ENCODE measurements at regions of chr13 and their contacts with region 1.

Region 1: GRCh38 chr13:21476893-21477472 is 17.9 kb upstream of the ZDHHC20 start:
- DNase-seq: peak; percentile 93
- H3K4me3 ChIP-seq: peak overlapping the region; percentile 23
- H3K27ac ChIP-seq: peak overlapping the region; percentile 61
- H3K4me1 ChIP-seq: peaks cover 30% of the 10 kb centered on the region
- H3K27me3 ChIP-seq: no peaks in the 10 kb centered on the region
- CTCF ChIP-seq: peak; percentile 99

Region 2: GRCh38 chr13:20495082-20496023 is 981.6 kb before region 1 on chr13:
- CTCF ChIA-PET with region 1: interaction called, 3 read pairs
- POLR2A ChIA-PET with region 1: no interaction called
- intact Hi-C with region 1: loop called (anchors 1 kb)
- DNase-seq: peak; percentile 75
- H3K4me3 ChIP-seq: no peak overlapping the region
- H3K27ac ChIP-seq: no peak overlapping the region
- H3K4me1 ChIP-seq: peaks cover 8% of the 10 kb centered on the region
- H3K27me3 ChIP-seq: no peaks in the 10 kb centered on the region
- CTCF ChIP-seq: peak; percentile 96

Region 3: DNA sequence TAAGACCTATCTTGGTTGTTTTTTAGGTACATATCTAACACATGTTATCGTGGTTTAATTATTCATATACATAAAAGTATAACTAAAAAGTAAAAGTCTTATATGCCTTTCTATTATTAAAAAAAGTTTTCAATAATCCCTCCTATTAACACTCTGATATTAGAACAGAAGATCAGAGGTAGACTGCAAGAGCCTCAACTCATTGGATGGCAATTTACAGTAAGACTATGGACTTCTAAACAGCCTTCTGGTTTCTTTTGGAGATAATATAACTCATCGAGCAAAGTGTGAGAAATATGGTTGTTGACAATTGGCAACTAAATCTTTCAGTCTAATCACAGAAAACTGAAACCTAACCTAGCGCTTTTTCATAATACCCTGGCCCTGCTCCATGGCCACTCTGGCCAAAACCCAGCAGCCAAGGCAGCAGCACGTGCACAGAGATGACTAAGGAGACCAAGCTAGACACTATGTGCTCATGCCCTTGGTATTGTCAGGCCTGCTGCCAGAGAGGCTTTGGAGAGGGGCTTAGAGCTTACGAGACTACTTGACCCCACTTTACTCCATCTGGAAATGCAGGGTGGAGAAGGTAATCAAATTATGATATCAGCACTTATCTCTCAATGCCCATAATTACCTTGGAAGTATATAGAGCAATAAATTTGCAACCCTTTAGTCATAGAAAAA is 662.6 kb before region 1 on chr13:
- CTCF ChIA-PET with region 1: no interaction called
- POLR2A ChIA-PET with region 1: no interaction called
- intact Hi-C with region 1: no loop called
- DNase-seq: peak; percentile 48
- H3K4me3 ChIP-seq: no peak overlapping the region
- H3K27ac ChIP-seq: no peak overlapping the region
- H3K4me1 ChIP-seq: peaks cover 5% of the 10 kb centered on the region
- H3K27me3 ChIP-seq: no peaks in the 10 kb centered on the region
- CTCF ChIP-seq: no peak

Region 4: DNA sequence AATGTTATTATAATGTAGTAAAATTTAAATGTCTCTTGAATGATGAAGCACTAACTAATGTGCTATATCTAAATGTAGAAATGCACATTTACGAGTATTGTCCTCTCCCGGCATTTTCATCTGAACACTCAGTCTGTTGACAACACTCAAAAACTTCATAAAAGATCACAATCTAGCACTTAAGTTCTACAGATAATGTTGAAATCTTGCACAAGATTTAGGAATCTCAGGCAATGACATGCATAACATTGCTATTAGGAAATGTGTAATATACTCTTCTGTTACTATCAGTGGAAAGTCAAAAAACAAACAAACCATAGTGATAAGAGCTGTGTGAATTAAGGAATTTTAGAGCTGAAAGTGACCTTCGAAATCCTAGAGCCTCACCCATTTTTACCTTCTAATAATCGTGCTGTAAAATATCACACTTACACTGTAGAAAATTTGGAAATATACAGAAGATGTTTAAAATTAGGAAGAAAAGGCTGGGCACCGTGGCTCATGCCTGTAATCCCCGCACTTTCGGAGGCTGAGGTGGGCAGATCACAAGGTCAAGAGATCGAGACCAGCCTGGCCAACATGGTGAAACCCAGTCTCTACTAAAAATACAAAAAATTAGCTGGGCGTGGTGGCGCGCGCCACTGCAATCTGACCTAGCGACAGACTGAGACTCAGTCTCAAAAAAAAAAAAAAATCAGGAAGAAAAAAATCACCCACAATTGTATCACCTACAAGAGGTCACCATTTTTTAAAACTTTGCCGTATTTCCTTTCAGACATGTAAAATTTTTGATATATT is 536.7 kb before region 1 on chr13:
- CTCF ChIA-PET with region 1: no interaction called
- POLR2A ChIA-PET with region 1: no interaction called
- intact Hi-C with region 1: loop called (anchors 5 kb)
- DNase-seq: no peak
- H3K4me3 ChIP-seq: no peak overlapping the region
- H3K27ac ChIP-seq: no peak overlapping the region
- H3K4me1 ChIP-seq: peaks cover 6% of the 10 kb centered on the region
- H3K27me3 ChIP-seq: no peaks in the 10 kb centered on the region
- CTCF ChIP-seq: no peak

Region 5: DNA sequence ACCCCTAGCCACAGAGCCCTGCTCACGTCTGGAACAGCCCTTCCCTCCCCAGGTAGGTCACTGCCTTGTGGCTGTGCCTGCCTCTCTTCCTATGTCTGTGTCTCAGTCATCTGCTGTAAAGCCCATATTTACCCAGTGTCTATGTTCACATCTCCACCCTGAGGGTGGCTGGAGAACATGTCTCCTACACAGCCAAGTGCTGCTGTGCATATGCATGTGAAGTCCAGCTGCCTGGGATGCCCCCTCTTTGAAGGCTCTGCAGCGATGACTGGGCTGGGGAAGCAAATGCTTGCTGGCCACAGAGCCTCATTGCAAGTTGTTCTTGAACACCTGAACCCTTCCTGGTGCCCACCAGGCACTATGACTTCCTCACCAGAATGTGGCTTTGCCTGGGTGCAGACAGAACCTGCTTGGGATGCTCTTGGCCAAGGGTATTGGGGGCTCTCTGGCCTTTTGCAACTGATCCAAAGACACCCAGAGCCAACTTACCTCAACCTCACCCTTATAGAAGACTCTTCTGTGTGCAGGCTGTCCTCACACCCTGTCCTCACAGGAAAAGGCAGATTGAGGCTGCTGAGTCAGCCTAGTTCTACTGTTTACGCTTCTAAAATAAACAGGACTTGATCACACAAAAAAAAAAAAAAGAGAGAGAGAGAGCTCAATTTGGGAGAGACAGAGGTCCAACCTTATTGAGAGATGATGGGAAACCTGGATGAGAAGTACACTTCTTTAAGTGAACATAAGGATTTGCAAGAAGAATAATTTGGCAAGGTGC is 274.0 kb before region 1 on chr13:
- CTCF ChIA-PET with region 1: no interaction called
- POLR2A ChIA-PET with region 1: no interaction called
- intact Hi-C with region 1: loop called (anchors 1 kb)
- DNase-seq: no peak
- H3K4me3 ChIP-seq: no peak overlapping the region
- H3K27ac ChIP-seq: peak overlapping the region; percentile 31
- H3K4me1 ChIP-seq: peaks cover 21% of the 10 kb centered on the region
- H3K27me3 ChIP-seq: no peaks in the 10 kb centered on the region
- CTCF ChIP-seq: no peak

Region 6: GRCh38 chr13:21297914-21298831 is 178.8 kb before region 1 on chr13:
- CTCF ChIA-PET with region 1: interaction called, 9 read pairs
- POLR2A ChIA-PET with region 1: no interaction called
- intact Hi-C with region 1: loop called (anchors 1 kb)
- DNase-seq: peak; percentile 95
- H3K4me3 ChIP-seq: peak overlapping the region; percentile 86
- H3K27ac ChIP-seq: peak overlapping the region; percentile 70
- H3K4me1 ChIP-seq: peaks cover 25% of the 10 kb centered on the region
- H3K27me3 ChIP-seq: no peaks in the 10 kb centered on the region
- CTCF ChIP-seq: peak; percentile 92

Region 7: GRCh38 chr13:21308407-21308806 is 168.6 kb before region 1 on chr13:
- CTCF ChIA-PET with region 1: no interaction called
- POLR2A ChIA-PET with region 1: no interaction called
- intact Hi-C with region 1: no loop called
- DNase-seq: no peak
- H3K4me3 ChIP-seq: no peak overlapping the region
- H3K27ac ChIP-seq: no peak overlapping the region
- H3K4me1 ChIP-seq: no peaks in the 10 kb centered on the region
- H3K27me3 ChIP-seq: no peaks in the 10 kb centered on the region
- CTCF ChIP-seq: no peak

Region 8: GRCh38 chr13:21402586-21403228 is 74.3 kb before region 1 on chr13:
- CTCF ChIA-PET with region 1: no interaction called
- POLR2A ChIA-PET with region 1: no interaction called
- intact Hi-C with region 1: loop called (anchors 5 kb)
- DNase-seq: peak; percentile 23
- H3K4me3 ChIP-seq: no peak overlapping the region
- H3K27ac ChIP-seq: no peak overlapping the region
- H3K4me1 ChIP-seq: peaks cover 46% of the 10 kb centered on the region
- H3K27me3 ChIP-seq: no peaks in the 10 kb centered on the region
- CTCF ChIP-seq: no peak

Measured in A673 (cell line).